PC-3 (cell line): ENCODE measurements at regions of chr10 and their contacts with region 1.

Region 1: DNA sequence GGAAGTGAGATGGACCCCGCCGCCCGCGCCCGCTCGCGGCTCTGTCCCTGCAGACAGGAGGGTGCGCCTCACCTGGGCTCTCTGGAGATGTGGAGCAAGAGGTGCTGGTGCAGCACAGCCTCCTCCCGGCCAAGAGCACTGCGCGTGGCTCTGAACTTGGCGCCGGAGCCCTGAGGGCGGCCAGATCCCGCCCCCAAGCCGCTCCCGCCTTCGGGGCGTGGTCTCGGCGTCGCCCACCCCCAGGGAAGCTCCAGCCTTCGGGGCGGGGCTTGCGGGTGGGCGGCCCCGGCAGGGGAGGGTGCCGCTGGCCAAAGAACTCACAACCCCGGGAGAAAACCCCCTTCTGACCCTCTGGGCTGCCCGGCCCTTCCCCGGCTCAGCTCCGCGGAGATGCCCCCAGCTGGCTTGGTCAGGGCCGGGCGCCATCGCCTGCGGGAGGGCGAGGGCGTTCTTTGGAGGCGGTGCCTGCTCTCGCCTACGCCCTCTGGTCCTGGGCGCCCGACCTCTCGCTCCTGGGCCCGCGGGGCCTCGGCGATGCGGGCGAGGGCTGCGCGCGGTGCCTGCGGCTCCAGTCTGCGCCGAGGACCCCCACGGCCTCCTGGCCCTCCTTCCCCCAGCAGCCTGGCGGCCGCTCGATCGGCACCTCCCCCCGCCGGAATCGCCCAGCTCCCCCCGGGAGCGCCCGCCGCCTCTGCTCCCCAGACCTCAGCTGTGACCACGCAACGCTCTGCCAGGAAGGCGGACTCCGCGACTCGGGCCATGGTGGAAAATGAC is at the start of gene ZNF488:
- DNase-seq: peak; percentile 86
- ATAC-seq: peak; percentile 96
- H3K4me3 ChIP-seq: peak within 1 kb of the TSS; percentile 76
- H3K27ac ChIP-seq: no peak within 1 kb of the TSS
- H3K4me1 ChIP-seq: peaks cover 4% of the 10 kb centered on the region; the same call in 1 of the 2 replicates
- H3K27me3 ChIP-seq: no peaks in the 10 kb centered on the region
- CTCF ChIP-seq: no peak
- total RNA-seq, gene ZNF488: 1.7 and 2.1 TPM in 2 replicates

Region 2: DNA sequence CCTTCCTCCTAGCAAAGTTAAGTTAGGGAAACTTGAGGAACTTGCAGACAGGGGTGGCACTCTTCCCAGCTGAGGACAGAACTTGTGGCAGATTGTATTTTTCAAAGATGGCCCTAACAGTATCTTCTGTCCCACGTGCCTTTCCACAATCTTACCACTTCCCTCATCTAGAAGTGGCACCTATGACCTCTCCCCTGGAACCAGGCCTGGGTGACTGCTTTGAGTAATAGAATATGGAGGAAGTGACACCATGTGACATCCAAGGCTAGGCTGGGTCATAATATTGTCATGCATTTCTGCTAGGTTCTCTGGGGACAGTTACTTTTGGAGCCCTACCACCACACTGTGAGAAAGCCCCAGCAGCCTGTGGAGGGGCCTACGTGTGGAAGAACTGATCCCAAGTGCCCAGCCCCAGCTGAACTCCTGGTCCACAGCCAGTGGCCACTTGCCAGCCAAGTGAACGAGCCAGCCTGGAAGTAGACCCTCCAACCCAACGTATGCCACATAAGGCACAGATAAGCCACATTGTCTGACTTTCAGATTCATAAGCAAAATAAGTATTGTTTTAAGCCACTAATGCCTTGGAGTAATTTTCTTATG is 279.4 kb before region 1 on chr10:
- CTCF ChIA-PET with region 1: no interaction called
- POLR2A ChIA-PET with region 1: no interaction called
- intact Hi-C with region 1: no loop called
- DNase-seq: no peak
- ATAC-seq: no peak
- H3K4me3 ChIP-seq: no peak overlapping the region
- H3K27ac ChIP-seq: no peak overlapping the region
- H3K4me1 ChIP-seq: no peaks in the 10 kb centered on the region; the same call in 1 of the 2 replicates
- H3K27me3 ChIP-seq: no peaks in the 10 kb centered on the region
- CTCF ChIP-seq: no peak

Region 3: GRCh38 chr10:47253651-47254375 is 130.5 kb before region 1 on chr10:
- CTCF ChIA-PET with region 1: no interaction called
- POLR2A ChIA-PET with region 1: no interaction called
- intact Hi-C with region 1: no loop called
- DNase-seq: no peak
- ATAC-seq: no peak
- H3K4me3 ChIP-seq: no peak overlapping the region
- H3K27ac ChIP-seq: no peak overlapping the region
- H3K4me1 ChIP-seq: no peaks in the 10 kb centered on the region
- H3K27me3 ChIP-seq: no peaks in the 10 kb centered on the region
- CTCF ChIP-seq: no peak

Region 4: GRCh38 chr10:47336387-47337134 is 47.8 kb before region 1 on chr10:
- CTCF ChIA-PET with region 1: no interaction called
- POLR2A ChIA-PET with region 1: no interaction called
- intact Hi-C with region 1: no loop called
- DNase-seq: no peak
- ATAC-seq: no peak
- H3K4me3 ChIP-seq: no peak overlapping the region
- H3K27ac ChIP-seq: no peak overlapping the region
- H3K4me1 ChIP-seq: no peaks in the 10 kb centered on the region
- H3K27me3 ChIP-seq: peaks cover 7% of the 10 kb centered on the region
- CTCF ChIP-seq: no peak

Region 5: GRCh38 chr10:47354162-47354561 is 30.2 kb before region 1 on chr10:
- CTCF ChIA-PET with region 1: no interaction called
- POLR2A ChIA-PET with region 1: no interaction called
- intact Hi-C with region 1: no loop called
- DNase-seq: peak; percentile 29
- ATAC-seq: peak; percentile 90
- H3K4me3 ChIP-seq: no peak overlapping the region
- H3K27ac ChIP-seq: no peak overlapping the region
- H3K4me1 ChIP-seq: no peaks in the 10 kb centered on the region
- H3K27me3 ChIP-seq: no peaks in the 10 kb centered on the region
- CTCF ChIP-seq: peak; percentile 49

Region 6: DNA sequence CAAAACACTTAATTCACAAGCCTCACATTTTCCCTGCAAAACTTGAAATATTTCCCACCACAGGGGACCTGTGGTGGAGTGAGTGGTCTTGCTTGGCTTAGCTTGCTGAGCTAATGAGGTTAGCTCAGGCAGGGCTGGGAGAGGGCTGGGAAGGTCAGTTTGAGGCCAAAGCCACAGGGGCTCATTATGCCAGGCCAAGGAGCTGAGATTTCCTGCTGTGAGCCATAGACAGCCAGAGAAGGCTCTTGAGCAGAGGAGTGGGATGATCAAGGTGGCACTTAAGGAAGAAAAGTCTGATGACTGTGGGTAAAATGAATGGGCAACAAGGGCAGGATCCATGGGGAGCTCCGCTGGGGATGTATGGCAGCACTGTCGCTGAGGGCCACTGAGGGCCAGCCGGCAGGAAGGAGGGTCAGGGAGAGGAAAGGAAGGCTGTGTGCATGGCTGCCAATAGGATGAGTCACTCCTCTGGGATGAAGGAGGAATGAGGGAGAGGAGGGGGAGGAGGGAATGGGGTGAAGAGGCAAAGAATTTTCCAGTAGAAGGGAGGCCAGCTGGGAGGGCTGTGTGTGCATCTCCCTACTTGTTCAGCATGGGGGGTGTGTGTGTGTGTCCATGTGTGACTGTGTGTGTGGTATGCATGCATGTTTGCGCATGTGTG is 18.4 kb after region 1 on chr10:
- CTCF ChIA-PET with region 1: no interaction called
- POLR2A ChIA-PET with region 1: no interaction called
- intact Hi-C with region 1: loop called (anchors 2 kb)
- DNase-seq: peak; percentile 86
- ATAC-seq: peak; percentile 58
- H3K4me3 ChIP-seq: no peak overlapping the region
- H3K27ac ChIP-seq: peak overlapping the region; percentile 48
- H3K4me1 ChIP-seq: peaks cover 51% of the 10 kb centered on the region
- H3K27me3 ChIP-seq: no peaks in the 10 kb centered on the region
- CTCF ChIP-seq: no peak